Endothelial cell of umbilical vein (primary cell): ENCODE measurements at regions of chr4 and their contacts with region 1.

Region 1: GRCh38 chr4:77385124-77385969 is 220.3 kb upstream of the CXCL13 start:
- DNase-seq: peak; percentile 71
- H3K4me3 ChIP-seq: no peak overlapping the region
- H3K27ac ChIP-seq: no peak overlapping the region
- H3K4me1 ChIP-seq: no peaks in the 10 kb centered on the region
- H3K27me3 ChIP-seq: peaks cover 6 to 14% of the 10 kb centered on the region in 2 experiments
- CTCF ChIP-seq: peak; percentile 81
- POLR2A ChIP-seq: no peak

Region 2: DNA sequence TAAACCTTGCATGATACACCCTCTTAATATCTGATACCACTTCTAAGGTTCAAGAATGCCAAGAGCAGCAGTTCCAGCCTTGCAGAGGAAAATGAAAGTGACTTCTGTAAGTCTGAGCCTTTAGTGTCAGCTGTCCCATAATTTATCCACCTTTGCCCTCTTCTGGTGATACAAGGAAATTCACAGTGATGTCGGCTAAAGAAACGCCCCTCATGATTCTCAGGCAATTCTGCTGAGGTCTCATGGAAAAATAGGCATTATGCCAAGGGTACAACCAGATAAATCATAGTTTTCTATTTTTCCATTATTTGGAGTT is 48.0 kb after region 1 on chr4:
- CTCF ChIA-PET with region 1: interaction called, 3 read pairs
- POLR2A ChIA-PET with region 1: no interaction called
- dilution Hi-C with region 1: no loop called
- intact Hi-C with region 1: loop called (anchors 1 kb)
- DNase-seq: peak; percentile 56
- H3K4me3 ChIP-seq: no peak overlapping the region
- H3K27ac ChIP-seq: no peak overlapping the region
- H3K4me1 ChIP-seq: no peaks in the 10 kb centered on the region
- H3K27me3 ChIP-seq: peaks cover 0 to 8% of the 10 kb centered on the region in 2 experiments
- CTCF ChIP-seq: peak in 1 of 2 donors; percentile 25
- POLR2A ChIP-seq: no peak

Region 3: DNA sequence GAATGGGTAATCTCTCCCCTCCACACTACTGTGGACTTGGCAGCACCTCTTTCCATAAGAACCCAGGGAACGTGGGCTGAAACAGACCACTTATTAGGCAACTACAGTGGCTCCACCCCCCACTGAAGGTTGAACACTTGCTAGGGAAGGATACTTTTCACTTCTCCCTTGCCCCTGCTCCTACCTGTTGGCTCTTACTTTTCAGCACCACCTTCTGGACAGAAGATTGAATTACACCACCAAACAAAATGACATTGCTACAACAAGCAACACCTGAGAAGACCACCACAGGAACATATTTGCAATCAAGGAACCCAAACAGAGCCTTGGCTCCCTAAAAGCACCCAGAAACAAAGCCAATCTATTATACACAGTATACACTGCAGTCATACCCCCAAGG is 88.2 kb after region 1 on chr4:
- CTCF ChIA-PET with region 1: interaction called, 5 read pairs
- POLR2A ChIA-PET with region 1: no interaction called
- dilution Hi-C with region 1: no loop called
- intact Hi-C with region 1: loop called (anchors 1 kb)
- DNase-seq: peak; percentile 16
- H3K4me3 ChIP-seq: no peak overlapping the region
- H3K27ac ChIP-seq: no peak overlapping the region
- H3K4me1 ChIP-seq: no peaks in the 10 kb centered on the region
- H3K27me3 ChIP-seq: no peaks in the 10 kb centered on the region
- CTCF ChIP-seq: peak; percentile 17 to 20
- POLR2A ChIP-seq: no peak